Right cardiac atrium (tissue), 5 donors: ENCODE measurements at regions of chr15 and their contacts with region 1.

Region 1: GRCh38 chr15:52735231-52736089 is 54.7 kb downstream of the ONECUT1 start:
- DNase-seq: no peak
- ATAC-seq: peak; percentile 77 to 88
- H3K4me3 ChIP-seq: no peak overlapping the region
- H3K27ac ChIP-seq: no peak overlapping the region
- H3K4me1 ChIP-seq: no peaks in the 10 kb centered on the region
- H3K27me3 ChIP-seq: no peaks in the 10 kb centered on the region

Region 2: DNA sequence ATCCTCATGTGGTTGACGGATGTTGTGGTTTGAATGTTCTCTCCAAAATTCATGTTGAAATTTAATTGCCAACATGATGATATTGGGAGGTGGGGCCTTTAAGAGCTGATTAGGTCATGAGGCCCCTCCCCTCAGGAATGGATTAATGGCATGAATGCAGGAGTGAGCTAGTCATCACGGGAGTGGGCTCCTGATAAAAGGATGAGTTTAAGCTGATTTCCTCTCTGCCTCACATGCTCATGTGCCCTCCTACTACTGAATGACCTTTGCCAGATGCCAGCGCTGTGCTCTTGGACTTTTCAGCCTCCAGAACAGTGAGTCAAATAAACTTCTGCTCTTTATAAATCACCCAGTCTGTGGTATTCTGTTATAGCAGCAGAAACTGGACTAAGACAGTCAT is 317.9 kb before region 1 on chr15:
- intact Hi-C with region 1: no loop called
- DNase-seq: no peak
- ATAC-seq: peak in 1 of 2 donors; percentile 26
- H3K4me3 ChIP-seq: no peak overlapping the region
- H3K27ac ChIP-seq: no peak overlapping the region
- H3K4me1 ChIP-seq: no peaks in the 10 kb centered on the region
- H3K27me3 ChIP-seq: no peaks in the 10 kb centered on the region

Region 3: DNA sequence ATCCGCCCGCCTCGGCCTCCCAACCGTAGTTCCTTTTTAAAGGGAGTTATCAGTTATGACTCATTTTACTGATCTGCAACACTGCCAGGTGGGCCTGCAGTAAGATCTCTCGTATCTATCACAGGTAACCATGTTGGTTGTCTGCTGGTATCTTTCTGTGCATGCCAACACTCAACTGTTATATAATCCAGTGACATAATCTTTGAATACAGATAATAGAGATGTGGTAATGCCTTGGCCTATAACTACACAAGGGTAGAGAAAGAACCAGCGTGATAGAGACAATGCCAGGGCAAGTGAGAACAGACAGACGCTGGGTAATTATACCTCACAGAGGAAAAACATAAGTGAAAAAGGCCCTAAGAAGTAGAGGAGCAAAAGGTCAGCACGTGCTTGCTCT is 155.6 kb before region 1 on chr15:
- intact Hi-C with region 1: loop called in 1 of 4 experiments (anchors 10 kb)
- DNase-seq: no peak
- ATAC-seq: no peak
- H3K4me3 ChIP-seq: no peak overlapping the region
- H3K27ac ChIP-seq: no peak overlapping the region
- H3K4me1 ChIP-seq: no peaks in the 10 kb centered on the region
- H3K27me3 ChIP-seq: no peaks in the 10 kb centered on the region